ENCODE measurements at regions of chr18 and their contacts with region 1.

Region 1: GRCh38 chr18:23166891-23167541 is 31.7 kb downstream of the CABLES1 start:
- DNase-seq: no peak
- H3K4me3 ChIP-seq: no peak overlapping the region; a peak in 1 of 8 replicates
- H3K27ac ChIP-seq: no peak overlapping the region
- H3K4me1 ChIP-seq: peaks cover 18 to 38% (median 33%) of the 10 kb centered on the region in 4 experiments
- H3K27me3 ChIP-seq: no peaks in the 10 kb centered on the region
- CTCF ChIP-seq: no peak
- EP300 ChIP-seq: no peak
- POLR2A ChIP-seq: no peak
- RAD21 ChIP-seq: no peak

Region 2: DNA sequence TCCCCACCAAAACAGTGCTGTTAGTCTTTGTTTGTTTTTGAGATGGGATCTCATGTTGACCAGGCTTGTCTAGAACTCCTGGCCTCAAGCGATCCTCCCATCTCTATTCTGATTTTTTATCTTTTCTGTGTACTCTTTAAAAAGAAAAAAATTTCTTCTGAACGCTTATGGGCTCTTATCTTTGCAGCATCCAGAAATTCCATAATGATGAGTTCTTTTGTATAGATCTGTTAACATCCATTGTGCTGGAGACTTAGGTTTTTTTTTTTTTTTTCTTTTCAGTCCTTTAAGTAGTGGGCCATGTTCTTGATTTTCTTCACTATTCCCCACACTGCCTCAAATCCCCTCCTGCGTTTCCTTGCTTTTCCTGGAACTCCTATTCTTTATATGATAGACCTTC is 202.9 kb before region 1 on chr18:
- CTCF ChIA-PET with region 1: no interaction called
- POLR2A ChIA-PET with region 1: no interaction called
- DNase-seq: no peak
- H3K4me3 ChIP-seq: no peak overlapping the region
- H3K27ac ChIP-seq: no peak overlapping the region
- H3K4me1 ChIP-seq: no peaks in the 10 kb centered on the region
- H3K27me3 ChIP-seq: no peaks in the 10 kb centered on the region
- CTCF ChIP-seq: no peak
- EP300 ChIP-seq: no peak
- POLR2A ChIP-seq: no peak
- RAD21 ChIP-seq: no peak

Region 3: GRCh38 chr18:23143016-23143814 is 23.8 kb before region 1 on chr18:
- CTCF ChIA-PET with region 1: interaction called, 8 read pairs
- POLR2A ChIA-PET with region 1: interaction called, 12 read pairs
- DNase-seq: no peak
- H3K4me3 ChIP-seq: no peak overlapping the region
- H3K27ac ChIP-seq: no peak overlapping the region
- H3K4me1 ChIP-seq: peaks cover 7 to 30% (median 12%) of the 10 kb centered on the region in 4 experiments
- H3K27me3 ChIP-seq: no peaks in the 10 kb centered on the region
- CTCF ChIP-seq: no peak
- EP300 ChIP-seq: no peak
- POLR2A ChIP-seq: no peak
- RAD21 ChIP-seq: no peak

Region 4: DNA sequence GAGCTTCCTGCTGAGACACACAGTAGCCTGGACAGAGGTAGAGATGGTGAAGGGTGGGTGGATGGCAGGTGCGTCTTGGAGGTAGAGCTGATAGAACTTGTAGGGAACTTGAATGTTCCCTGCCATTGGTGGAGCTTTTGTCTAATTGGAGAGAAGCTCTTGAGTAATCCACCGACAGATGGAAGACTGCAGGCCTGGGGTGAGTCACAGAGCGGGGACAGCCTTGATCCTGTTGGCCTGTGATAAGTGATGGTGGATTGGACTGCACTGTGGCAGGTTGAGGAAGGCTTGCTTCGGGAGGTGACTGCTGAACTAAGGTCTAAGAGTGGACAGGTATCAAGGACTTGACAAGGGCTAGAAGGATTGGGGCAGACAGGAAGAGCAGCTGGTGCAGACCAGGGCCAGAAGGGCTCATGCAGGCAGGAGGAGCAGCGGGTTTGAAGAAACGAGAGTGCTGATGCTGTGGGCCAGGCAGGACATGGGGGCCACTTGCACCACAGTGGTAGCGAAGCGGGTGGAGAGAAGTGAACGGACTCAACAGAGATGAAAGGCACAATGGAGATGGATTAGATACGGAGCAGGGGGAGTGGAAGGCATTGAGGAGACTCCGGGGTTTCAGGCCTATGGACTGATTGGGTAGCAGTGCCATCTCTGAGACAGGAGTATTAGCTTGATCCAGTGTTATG is 15.5 kb before region 1 on chr18:
- CTCF ChIA-PET with region 1: interaction called, 8 read pairs
- POLR2A ChIA-PET with region 1: interaction called, 12 read pairs
- DNase-seq: no peak
- H3K4me3 ChIP-seq: no peak overlapping the region
- H3K27ac ChIP-seq: no peak overlapping the region
- H3K4me1 ChIP-seq: peaks cover 3 to 17% (median 5%) of the 10 kb centered on the region in 4 experiments; a peak in 6 of 7 replicates
- H3K27me3 ChIP-seq: no peaks in the 10 kb centered on the region
- CTCF ChIP-seq: no peak
- EP300 ChIP-seq: no peak
- POLR2A ChIP-seq: no peak
- RAD21 ChIP-seq: no peak

Region 5: DNA sequence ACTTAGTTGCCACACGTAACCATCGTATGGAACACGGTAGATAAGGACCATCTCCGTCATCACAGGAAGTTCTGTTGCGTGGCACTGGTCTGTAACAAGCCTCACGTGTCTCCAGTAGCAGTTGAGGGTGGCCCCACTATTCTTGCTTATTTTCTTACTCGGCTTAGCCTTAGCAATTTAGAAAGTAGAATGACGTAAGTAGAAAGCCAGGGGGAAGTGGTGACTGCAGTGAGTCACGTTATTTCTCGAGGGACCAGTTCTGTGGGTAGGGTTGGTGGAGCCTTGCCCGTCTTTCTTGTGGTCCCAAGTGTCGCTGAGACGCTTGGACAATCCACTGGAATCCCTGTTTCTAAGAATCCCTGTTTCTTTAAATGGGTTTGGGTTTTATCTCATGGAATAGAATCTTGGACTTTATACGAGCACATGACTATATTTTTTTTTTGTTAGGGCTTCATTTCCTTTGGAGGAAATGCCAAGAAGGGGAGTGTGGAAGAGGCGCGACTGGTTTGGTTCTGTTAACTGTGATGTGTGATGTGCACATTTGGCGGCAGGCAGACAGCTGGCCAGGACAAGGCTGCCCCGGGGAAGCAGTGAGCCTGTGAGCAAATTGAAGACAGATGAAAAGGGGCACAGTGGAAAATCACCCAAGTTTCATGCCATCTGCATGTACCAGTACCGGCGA is 64.5 kb after region 1 on chr18:
- CTCF ChIA-PET with region 1: no interaction called
- POLR2A ChIA-PET with region 1: no interaction called
- DNase-seq: no peak
- H3K4me3 ChIP-seq: no peak overlapping the region
- H3K27ac ChIP-seq: no peak overlapping the region
- H3K4me1 ChIP-seq: peaks cover 4 to 10% (median 6%) of the 10 kb centered on the region in 4 experiments
- H3K27me3 ChIP-seq: no peaks in the 10 kb centered on the region
- CTCF ChIP-seq: no peak
- EP300 ChIP-seq: no peak
- POLR2A ChIP-seq: no peak
- RAD21 ChIP-seq: no peak

Region 6: GRCh38 chr18:23365602-23366001 is 198.6 kb after region 1 on chr18:
- CTCF ChIA-PET with region 1: no interaction called
- POLR2A ChIA-PET with region 1: no interaction called
- DNase-seq: no peak
- H3K4me3 ChIP-seq: no peak overlapping the region
- H3K27ac ChIP-seq: no peak overlapping the region
- H3K4me1 ChIP-seq: no peaks in the 10 kb centered on the region
- H3K27me3 ChIP-seq: no peaks in the 10 kb centered on the region
- CTCF ChIP-seq: no peak
- EP300 ChIP-seq: no peak
- POLR2A ChIP-seq: no peak
- RAD21 ChIP-seq: no peak

Measured in H1 (cell line).